ENCODE measurements at regions of chr10 and their contacts with region 1.

Region 1: DNA sequence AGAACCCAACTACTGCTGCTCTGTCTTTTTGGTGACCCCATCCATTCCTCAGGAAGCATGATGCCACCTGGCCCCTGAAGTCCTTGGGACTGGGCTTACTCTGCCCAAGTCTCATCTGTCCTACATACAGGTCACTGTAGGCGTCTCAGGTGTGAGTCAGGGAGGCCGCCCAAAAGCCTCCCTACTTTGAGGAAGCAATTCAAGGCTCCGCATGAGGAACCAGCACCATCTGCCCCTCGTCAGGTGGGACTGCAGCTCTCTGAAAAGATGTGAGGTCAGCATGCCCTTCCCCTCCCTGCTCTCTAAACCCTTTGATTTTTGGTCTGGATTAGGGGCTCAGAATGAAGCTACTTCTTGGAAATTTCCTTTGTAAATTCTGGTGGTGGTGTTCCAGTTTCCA is 354.8 kb downstream of the CXCL12 start:
- DNase-seq: peak; percentile 71
- H3K4me3 ChIP-seq: no peak overlapping the region
- H3K27ac ChIP-seq: no peak overlapping the region
- H3K4me1 ChIP-seq: peaks cover 9% of the 10 kb centered on the region
- CTCF ChIP-seq: peak; percentile 83

Region 2: DNA sequence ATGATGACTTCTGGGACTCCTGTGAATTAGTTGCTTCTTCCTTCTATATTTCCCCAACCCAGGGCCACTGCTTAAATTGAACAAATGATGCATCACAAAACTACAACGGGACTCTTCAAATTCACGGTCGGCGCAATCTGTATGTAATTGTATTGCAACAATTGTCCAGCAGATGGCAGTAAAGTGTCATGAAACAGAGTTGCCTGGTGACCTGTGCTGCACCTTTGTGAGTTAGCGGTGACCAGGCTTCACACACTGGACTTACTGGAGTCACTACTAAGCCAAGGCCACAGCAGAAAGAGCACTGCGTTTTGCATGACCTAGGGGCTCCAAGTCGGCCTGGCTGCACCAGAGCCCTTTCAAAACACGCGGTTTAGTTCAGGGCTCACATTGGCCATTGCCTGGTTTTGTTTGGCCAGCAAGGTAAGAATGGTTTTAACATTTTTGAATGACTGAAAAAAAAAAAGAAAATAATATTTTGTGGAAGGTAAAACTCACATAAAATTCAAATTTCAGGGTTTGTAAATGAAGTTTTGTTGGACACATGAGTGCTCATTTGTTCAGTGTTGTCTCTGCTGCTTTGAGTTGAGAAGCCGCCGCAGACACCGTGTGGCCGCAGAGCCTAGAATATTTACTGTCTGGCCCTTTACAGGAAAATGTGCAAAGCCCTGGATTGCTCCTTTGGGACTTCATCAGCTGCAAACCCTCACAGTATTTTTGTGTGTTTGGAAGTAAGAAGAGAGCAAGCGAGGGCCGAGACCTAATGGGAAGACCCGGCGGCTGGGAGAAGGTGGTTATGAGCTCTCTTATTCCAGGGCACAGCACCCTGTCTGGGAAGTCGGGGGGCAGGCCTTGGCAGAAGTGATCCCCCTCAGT is 358.2 kb before region 1 on chr10:
- CTCF ChIA-PET with region 1: no interaction called
- POLR2A ChIA-PET with region 1: no interaction called
- intact Hi-C with region 1: loop called (anchors 2 kb)
- DNase-seq: peak; percentile 67
- H3K4me3 ChIP-seq: no peak overlapping the region
- H3K27ac ChIP-seq: no peak overlapping the region
- H3K4me1 ChIP-seq: no peaks in the 10 kb centered on the region
- CTCF ChIP-seq: peak; percentile 89

Region 3: DNA sequence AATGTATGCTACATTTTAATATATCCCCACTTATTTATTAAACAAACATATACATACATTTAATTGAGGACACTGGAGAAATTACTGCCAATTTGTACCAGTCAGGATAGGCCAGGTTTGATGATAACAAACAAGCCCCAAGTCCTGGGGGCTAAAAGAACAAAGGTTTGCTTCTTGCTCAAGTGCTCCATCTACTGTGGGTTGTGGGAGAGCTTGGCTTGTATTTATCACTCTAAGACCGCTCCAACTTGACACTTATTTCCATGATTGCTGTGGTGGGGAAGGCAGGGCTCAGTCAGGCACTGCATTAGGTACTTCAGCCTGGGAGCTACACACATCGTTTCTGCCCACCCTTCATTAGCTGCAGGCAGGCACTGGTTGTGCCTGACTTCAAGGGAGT is 244.9 kb before region 1 on chr10:
- CTCF ChIA-PET with region 1: no interaction called
- POLR2A ChIA-PET with region 1: no interaction called
- intact Hi-C with region 1: loop called (anchors 5 kb)
- DNase-seq: peak; percentile 8
- H3K4me3 ChIP-seq: no peak overlapping the region
- H3K27ac ChIP-seq: no peak overlapping the region
- H3K4me1 ChIP-seq: no peaks in the 10 kb centered on the region
- CTCF ChIP-seq: peak; percentile 59; the same call in 1 of the 2 replicates

Region 4: GRCh38 chr10:43901302-43901701 is 128.8 kb before region 1 on chr10:
- CTCF ChIA-PET with region 1: interaction called, 3 read pairs
- POLR2A ChIA-PET with region 1: no interaction called
- intact Hi-C with region 1: loop called (anchors 5 kb)
- DNase-seq: peak; percentile 26
- H3K4me3 ChIP-seq: no peak overlapping the region
- H3K27ac ChIP-seq: peak overlapping the region; percentile 44
- H3K4me1 ChIP-seq: peaks cover 22% of the 10 kb centered on the region
- CTCF ChIP-seq: peak; percentile 53

Region 5: DNA sequence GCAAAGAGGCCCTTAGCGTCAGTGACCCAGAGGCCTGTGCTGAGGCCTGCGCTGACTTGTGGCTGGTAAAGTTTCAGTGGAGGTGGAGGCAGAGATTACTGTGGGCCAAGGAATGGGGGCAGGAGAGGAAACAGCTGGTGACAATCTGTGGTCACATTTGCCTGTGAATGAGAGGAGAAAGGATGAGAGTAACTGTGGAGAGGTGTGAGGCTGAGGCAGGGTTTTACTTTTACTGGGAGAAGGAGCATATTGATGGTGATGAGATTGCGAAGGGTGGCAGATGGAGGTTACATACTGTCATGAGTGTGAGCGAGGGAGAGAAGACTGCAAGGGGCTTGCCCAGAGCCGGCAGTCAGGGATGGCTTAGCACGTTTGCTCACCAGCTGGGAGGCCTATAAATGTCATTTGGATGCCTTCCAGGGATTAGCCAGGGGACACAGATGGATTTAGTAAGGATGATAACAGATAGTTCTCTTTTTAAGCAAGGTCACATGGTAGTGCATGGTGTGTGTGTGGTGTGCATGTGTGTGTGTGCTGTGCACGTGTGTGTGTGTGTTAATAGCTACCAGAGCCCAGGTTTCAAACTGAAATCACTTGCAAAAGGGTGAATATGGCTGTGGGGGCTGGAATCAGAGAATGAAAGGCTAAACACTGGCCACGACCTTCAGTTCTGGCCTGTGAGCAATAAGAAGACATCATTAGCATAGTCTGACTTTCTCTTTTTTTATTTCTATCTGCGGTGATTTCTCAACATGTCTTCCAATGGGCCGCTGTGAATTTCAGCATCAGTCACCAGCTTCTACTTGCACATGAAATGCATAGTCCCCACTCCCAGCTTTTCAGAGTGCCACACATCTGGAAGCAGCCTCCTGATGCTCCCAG is 90.0 kb before region 1 on chr10:
- CTCF ChIA-PET with region 1: no interaction called
- POLR2A ChIA-PET with region 1: no interaction called
- intact Hi-C with region 1: loop called (anchors 1 kb)
- DNase-seq: peak; percentile 45
- H3K4me3 ChIP-seq: peak overlapping the region; percentile 29
- H3K27ac ChIP-seq: peak overlapping the region; percentile 90
- H3K4me1 ChIP-seq: peaks cover 72% of the 10 kb centered on the region
- CTCF ChIP-seq: no peak

Region 6: DNA sequence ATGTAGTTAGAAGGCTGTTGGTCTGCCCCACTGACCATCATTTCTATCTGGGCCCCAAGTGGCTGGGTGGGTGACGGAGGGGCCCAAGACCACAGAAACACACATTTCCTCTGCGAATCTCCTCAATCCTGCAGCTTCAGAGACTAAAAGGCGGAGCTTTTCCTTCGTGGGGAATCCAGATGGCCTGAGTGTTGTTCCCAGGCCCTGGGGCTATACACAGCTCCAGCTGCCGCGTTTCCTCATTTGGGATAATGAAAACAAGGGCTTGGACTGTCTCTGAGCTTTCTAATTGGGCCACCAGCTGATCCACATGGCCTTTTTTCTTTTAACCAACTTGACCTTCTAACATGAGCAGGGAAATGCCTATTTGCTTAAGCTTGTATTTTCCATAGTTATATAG is 14.9 kb after region 1 on chr10:
- CTCF ChIA-PET with region 1: no interaction called
- POLR2A ChIA-PET with region 1: no interaction called
- intact Hi-C with region 1: no loop called
- DNase-seq: no peak
- H3K4me3 ChIP-seq: no peak overlapping the region
- H3K27ac ChIP-seq: no peak overlapping the region
- H3K4me1 ChIP-seq: no peaks in the 10 kb centered on the region
- CTCF ChIP-seq: no peak

Measured in OCI-LY7 (cell line).